AG04450 (cell line): ENCODE measurements at regions of chr17 and their contacts with region 1.

Region 1: GRCh38 chr17:9217151-9218056 is 196.1 kb downstream of the NTN1 start:
- DNase-seq: peak; percentile 21
- H3K4me3 ChIP-seq: no peak overlapping the region
- H3K27ac ChIP-seq: peak overlapping the region; percentile 31
- H3K27me3 ChIP-seq: no peaks in the 10 kb centered on the region
- CTCF ChIP-seq: no peak

Region 2: GRCh38 chr17:9090641-9091096 is 126.7 kb before region 1 on chr17:
- CTCF ChIA-PET with region 1: no interaction called
- POLR2A ChIA-PET with region 1: no interaction called
- DNase-seq: no peak
- H3K4me3 ChIP-seq: no peak overlapping the region
- H3K27ac ChIP-seq: no peak overlapping the region
- H3K27me3 ChIP-seq: no peaks in the 10 kb centered on the region
- CTCF ChIP-seq: no peak

Region 3: DNA sequence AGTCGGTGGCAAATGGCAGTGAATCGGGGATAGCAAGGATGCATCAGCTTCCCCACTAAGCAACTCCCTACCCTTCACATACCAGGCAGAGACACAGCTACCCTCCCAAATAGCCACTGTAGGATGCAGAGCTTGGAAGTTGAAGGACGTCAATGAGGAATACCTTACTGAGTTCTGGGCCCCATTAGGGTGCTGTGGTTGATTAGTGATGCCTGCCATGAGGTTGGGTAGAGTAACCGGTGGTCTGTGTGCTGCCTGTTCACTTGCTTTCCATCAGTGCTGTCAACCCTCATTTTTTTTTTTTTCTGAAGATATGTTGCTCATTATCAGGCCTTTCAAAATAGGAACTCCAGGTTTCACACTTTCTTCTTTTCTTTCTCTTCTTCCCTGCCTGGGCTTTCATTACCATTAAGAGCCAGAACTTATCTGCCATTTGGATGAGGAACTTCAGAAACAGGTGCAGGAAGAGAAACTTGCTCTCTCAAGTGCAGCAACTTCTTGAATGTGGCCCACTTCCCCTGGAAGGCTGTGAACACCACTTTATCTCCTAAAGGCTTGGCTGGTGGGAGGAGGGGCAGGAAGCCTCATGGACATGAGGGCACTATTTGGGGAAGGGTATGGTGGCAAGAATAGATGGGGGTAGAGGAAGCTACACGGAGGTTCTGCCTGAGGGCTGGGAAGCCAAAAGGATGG is 12.6 kb before region 1 on chr17:
- CTCF ChIA-PET with region 1: no interaction called
- POLR2A ChIA-PET with region 1: interaction called, 15 read pairs
- DNase-seq: no peak
- H3K4me3 ChIP-seq: no peak overlapping the region
- H3K27ac ChIP-seq: no peak overlapping the region
- H3K27me3 ChIP-seq: peaks cover 26% of the 10 kb centered on the region
- CTCF ChIP-seq: no peak